Breast epithelium (tissue), 4 donors: ENCODE measurements at regions of chr11 and their contacts with region 1.

Region 1: GRCh38 chr11:93813974-93814373 is 29.9 kb downstream of the MED17 start:
- DNase-seq: no peak
- H3K4me3 ChIP-seq: no peak overlapping the region
- H3K27ac ChIP-seq: no peak overlapping the region
- H3K4me1 ChIP-seq: no peaks in the 10 kb centered on the region
- H3K27me3 ChIP-seq: no peaks in the 10 kb centered on the region
- CTCF ChIP-seq: no peak
- POLR2A ChIP-seq: no peak

Region 2: GRCh38 chr11:93775289-93775688 is 38.7 kb before region 1 on chr11:
- intact Hi-C with region 1: no loop called
- DNase-seq: no peak
- H3K4me3 ChIP-seq: no peak overlapping the region
- H3K27ac ChIP-seq: no peak overlapping the region
- H3K4me1 ChIP-seq: no peaks in the 10 kb centered on the region
- H3K27me3 ChIP-seq: no peaks in the 10 kb centered on the region
- CTCF ChIP-seq: no peak
- POLR2A ChIP-seq: no peak

Region 3: DNA sequence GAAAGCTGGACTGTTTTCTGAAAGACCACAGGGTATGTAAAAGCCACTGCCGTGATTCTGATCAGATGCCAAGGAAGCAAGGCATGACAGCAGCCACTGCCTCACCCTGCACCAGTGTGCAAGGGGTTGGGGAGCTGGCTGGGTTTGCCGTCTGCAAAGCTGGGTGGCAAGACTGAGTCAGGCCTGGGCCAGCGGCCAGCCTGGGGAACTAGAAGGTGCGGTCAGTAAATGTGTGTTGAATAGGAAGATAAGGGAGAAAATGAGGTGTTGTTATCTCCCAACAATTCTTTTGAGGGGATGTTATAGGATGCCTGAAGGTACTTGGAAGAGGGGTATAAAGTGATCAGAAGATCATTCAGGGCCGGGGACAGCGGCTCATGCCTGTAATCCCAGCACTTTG is 28.5 kb after region 1 on chr11:
- intact Hi-C with region 1: loop called (anchors 2 kb)
- DNase-seq: no peak
- H3K4me3 ChIP-seq: no peak overlapping the region
- H3K27ac ChIP-seq: no peak overlapping the region
- H3K4me1 ChIP-seq: no peaks in the 10 kb centered on the region
- H3K27me3 ChIP-seq: no peaks in the 10 kb centered on the region
- CTCF ChIP-seq: no peak
- POLR2A ChIP-seq: no peak

Region 4: GRCh38 chr11:93857413-93858120 is 43.6 kb after region 1 on chr11:
- intact Hi-C with region 1: no loop called
- DNase-seq: no peak
- H3K4me3 ChIP-seq: no peak overlapping the region
- H3K27ac ChIP-seq: no peak overlapping the region
- H3K4me1 ChIP-seq: peaks cover 0 to 3% of the 10 kb centered on the region in 2 donors
- H3K27me3 ChIP-seq: no peaks in the 10 kb centered on the region
- CTCF ChIP-seq: no peak
- POLR2A ChIP-seq: no peak